CD4-positive, alpha-beta T cell (primary cell): ENCODE measurements at regions of chr16 and their contacts with region 1.

Region 1: GRCh38 chr16:89549007-89549700 is 11.3 kb upstream of the RPL13 start:
- DNase-seq: peak in 6 of 14 experiments; percentile 17 to 67 (median 42)
- ATAC-seq: peak; percentile 87
- H3K4me3 ChIP-seq: no peak overlapping the region
- H3K4me3 Mint-ChIP-seq: peak overlapping the region; percentile 74
- H3K27ac ChIP-seq: peak overlapping the region in 1 of 2 donors; percentile 36
- H3K27ac Mint-ChIP-seq: peak overlapping the region; percentile 91
- H3K4me1 ChIP-seq: peaks cover 19% of the 10 kb centered on the region
- H3K4me1 Mint-ChIP-seq: peaks cover 15% of the 10 kb centered on the region
- H3K27me3 ChIP-seq: no peaks in the 10 kb centered on the region
- H3K27me3 Mint-ChIP-seq: no peaks in the 10 kb centered on the region
- CTCF ChIP-seq: no peak

Region 2: DNA sequence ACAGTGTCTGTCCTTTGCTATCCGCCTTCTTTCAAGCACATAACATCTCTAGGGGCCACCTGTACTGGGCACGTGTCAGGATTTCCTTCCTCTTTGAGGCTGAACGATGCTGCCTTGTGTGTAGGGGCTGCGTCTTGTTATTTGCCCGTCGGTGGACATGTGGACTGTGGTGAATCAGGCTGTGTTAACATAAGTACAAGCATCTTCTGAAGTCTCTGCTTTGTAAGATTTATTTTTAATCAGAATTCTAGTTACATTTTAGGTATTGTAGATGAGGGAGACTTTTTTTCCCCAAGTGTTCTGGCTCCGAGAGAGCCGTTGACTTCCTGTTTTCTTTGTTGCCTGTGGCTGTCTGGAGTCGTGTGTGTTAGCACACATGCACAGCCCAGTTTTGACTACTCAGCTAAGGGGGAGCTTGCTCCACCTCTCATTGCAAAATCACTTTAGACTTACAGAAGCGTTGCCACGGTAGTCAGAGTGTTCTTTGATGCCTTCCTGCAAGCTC is 14.8 kb before region 1 on chr16:
- CTCF ChIA-PET with region 1: interaction called, 3 read pairs
- POLR2A ChIA-PET with region 1: interaction called, 20 read pairs
- intact Hi-C with region 1: loop called in 1 of 2 experiments (anchors 2 kb)
- DNase-seq: peak; percentile 25 to 81 (median 48)
- ATAC-seq: peak; percentile 96
- H3K4me3 ChIP-seq: no peak overlapping the region
- H3K4me3 Mint-ChIP-seq: peak overlapping the region; percentile 59
- H3K27ac ChIP-seq: peak overlapping the region; percentile 21 to 51
- H3K27ac Mint-ChIP-seq: peak overlapping the region; percentile 92
- H3K4me1 ChIP-seq: peaks cover 34% of the 10 kb centered on the region
- H3K4me1 Mint-ChIP-seq: peaks cover 23% of the 10 kb centered on the region
- H3K27me3 ChIP-seq: no peaks in the 10 kb centered on the region
- H3K27me3 Mint-ChIP-seq: no peaks in the 10 kb centered on the region
- CTCF ChIP-seq: no peak

Region 3: GRCh38 chr16:89586853-89587252 is 37.7 kb after region 1 on chr16:
- CTCF ChIA-PET with region 1: no interaction called
- POLR2A ChIA-PET with region 1: no interaction called
- intact Hi-C with region 1: no loop called
- DNase-seq: peak in 2 of 14 experiments; percentile 53 to 55
- ATAC-seq: peak; percentile 46
- H3K4me3 ChIP-seq: no peak overlapping the region
- H3K4me3 Mint-ChIP-seq: no peak overlapping the region
- H3K27ac ChIP-seq: no peak overlapping the region
- H3K27ac Mint-ChIP-seq: no peak overlapping the region
- H3K4me1 ChIP-seq: no peaks in the 10 kb centered on the region
- H3K4me1 Mint-ChIP-seq: no peaks in the 10 kb centered on the region
- H3K27me3 ChIP-seq: no peaks in the 10 kb centered on the region
- H3K27me3 Mint-ChIP-seq: no peaks in the 10 kb centered on the region
- CTCF ChIP-seq: no peak